Dorsolateral prefrontal cortex (tissue), 120 donors: ENCODE measurements at regions of chr2 and their contacts with region 1.

Region 1: GRCh38 chr2:38528008-38528442 is 74.7 kb downstream of the HNRNPLL start:
- DNase-seq: peak in 8 of 10 donors; percentile 36 to 74 (median 56)
- H3K4me3 ChIP-seq: peak overlapping the region; percentile 23 to 68 (median 54)
- H3K27ac ChIP-seq: peak overlapping the region in 35 of 59 donors; percentile 3 to 81 (median 51)
- H3K27me3 ChIP-seq: peaks cover 0 to 4% (median 0%) of the 10 kb centered on the region in 45 donors
- CTCF ChIP-seq: peak in 25 of 56 donors; percentile 7 to 45 (median 24)

Region 2: DNA sequence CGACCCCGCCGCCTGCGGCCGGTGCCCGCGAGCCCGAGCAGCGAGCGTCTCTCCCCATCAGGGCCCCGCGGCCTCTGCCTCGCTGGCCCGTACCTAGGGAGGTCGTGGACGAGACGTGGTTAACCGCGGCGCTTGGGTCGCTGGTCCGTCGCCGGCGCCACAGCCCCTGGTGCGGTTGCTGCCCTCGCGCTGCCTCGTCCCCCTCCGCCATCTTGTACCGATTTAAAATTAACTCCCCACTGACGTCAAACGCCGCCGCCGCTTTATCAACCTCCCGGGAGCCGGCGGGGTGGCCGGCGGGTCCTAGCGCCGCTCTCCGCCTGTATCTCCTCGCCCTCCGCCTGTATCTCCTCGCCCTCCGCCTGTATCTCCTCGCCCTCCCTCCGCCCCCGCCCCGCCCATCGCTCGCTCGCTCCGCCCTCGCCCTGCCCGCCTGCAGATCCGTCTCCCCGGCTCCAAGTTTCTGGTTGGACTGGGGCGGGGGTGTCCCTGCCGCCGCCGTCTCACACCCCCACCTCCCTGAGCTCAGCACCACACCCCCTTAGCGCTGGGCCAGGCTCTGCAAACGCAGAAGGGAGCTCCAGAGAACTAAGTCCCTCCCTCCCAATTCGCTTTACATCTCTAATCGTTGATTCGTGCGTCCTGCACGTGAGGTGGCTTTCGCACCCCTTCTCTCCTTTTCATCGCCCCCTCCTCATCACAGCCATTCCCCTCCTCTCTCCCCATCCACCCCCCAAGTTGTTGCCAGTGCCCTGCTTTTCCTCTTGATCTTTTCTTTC is 150.8 kb before region 1 on chr2 and contains the start of gene ATL2:
- intact Hi-C with region 1: loop called in 1 of 2 experiments (anchors 5 kb)
- DNase-seq: peak; percentile 89 to 96 (median 95)
- H3K4me3 ChIP-seq: peak within 1 kb of the TSS; percentile 78 to 98 (median 90)
- H3K27ac ChIP-seq: peak within 1 kb of the TSS; percentile 65 to 98 (median 93)
- H3K27me3 ChIP-seq: no peaks in the 10 kb centered on the region
- CTCF ChIP-seq: peak in 11 of 56 donors; percentile 9 to 46 (median 20)
- total RNA-seq, gene ATL2: 36.1 to 104 (median 69.2) TPM

Region 3: GRCh38 chr2:38409156-38410122 is 118.6 kb before region 1 on chr2:
- intact Hi-C with region 1: no loop called
- DNase-seq: peak in 4 of 10 donors; percentile 5 to 49 (median 32)
- H3K4me3 ChIP-seq: no peak overlapping the region
- H3K27ac ChIP-seq: peak overlapping the region in 46 of 59 donors; percentile 12 to 83 (median 64)
- H3K27me3 ChIP-seq: no peaks in the 10 kb centered on the region
- CTCF ChIP-seq: no peak

Region 4: GRCh38 chr2:38791744-38792143 is 263.7 kb after region 1 on chr2:
- intact Hi-C with region 1: no loop called
- DNase-seq: no peak
- H3K4me3 ChIP-seq: no peak overlapping the region
- H3K27ac ChIP-seq: no peak overlapping the region
- H3K27me3 ChIP-seq: no peaks in the 10 kb centered on the region
- CTCF ChIP-seq: no peak